Left colon (tissue), 2 donors: ENCODE measurements at regions of chr12 and their contacts with region 1.

Region 1: DNA sequence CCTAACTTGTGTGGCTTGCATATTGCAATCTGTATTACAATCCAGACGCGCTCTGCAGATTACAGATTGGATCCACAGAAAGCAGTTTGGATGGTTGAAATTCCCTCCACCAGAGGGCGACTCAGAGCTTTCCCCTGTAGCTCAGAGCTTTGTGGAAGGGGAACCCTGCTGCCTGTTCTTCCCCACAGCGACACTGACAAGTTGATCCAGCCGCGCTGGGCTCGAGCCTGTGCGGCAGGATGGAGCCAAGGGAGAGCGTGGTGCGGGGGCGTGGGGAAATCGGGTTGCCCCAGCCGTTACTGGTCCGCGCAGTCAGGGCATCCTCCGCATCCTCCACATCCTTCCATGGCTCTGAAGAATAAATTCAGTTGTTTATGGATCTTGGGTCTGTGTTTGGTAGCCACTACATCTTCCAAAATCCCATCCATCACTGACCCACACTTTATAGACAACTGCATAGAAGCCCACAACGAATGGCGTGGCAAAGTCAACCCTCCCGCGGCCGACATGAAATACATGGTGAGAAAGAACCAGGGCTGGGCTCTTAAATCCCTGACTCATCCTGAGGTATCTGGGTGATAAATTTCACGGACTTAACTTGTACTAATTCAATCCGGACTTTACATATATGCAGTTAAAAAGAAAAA is at the start of gene GLIPR1L1:
- DNase-seq: peak; percentile 68 to 88
- ATAC-seq: peak; percentile 64
- total RNA-seq, gene GLIPR1L1: not detected

Region 2: GRCh38 chr12:75390899-75391538 is 56.5 kb after region 1 on chr12 and contains the start of gene GLIPR1L2:
- intact Hi-C with region 1: loop called in 1 of 2 experiments (anchors 10 kb)
- DNase-seq: peak; percentile 92 to 94
- ATAC-seq: peak; percentile 100
- total RNA-seq, gene GLIPR1L2: not detected

Region 3: DNA sequence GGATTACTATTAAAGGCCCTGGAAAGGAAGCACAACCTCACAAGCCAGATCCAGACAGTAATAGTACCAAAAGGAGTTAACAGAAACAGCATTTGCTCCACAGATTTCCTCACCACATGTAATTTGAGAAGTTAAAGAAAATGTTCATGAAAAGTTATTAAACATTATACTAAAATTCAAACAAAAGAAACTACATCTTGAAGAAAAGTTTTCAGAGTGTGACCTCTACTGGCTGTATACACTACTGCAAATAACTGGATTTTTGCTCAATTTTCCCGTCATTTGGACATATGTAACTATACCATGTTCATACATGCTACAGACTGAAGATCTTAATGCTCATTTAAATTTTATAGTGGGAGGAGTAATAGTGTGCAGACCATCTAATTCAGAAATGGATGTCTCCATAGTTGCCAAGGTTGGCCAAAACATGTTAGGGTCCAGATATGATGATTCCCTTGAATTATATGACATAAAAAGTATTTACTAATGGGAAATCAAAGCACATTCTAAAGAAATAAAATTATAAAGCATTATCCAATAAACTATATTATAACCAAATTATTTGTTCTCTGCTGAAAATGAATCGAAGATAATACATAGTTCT is 171.3 kb after region 1 on chr12:
- intact Hi-C with region 1: loop called in 1 of 2 experiments (anchors 5 kb)
- DNase-seq: no peak
- ATAC-seq: no peak